ENCODE measurements at regions of chr2 and their contacts with region 1.

Region 1: GRCh38 chr2:104849618-104850141 is 4.2 kb upstream of the POU3F3 start:
- DNase-seq: no peak

Region 2: DNA sequence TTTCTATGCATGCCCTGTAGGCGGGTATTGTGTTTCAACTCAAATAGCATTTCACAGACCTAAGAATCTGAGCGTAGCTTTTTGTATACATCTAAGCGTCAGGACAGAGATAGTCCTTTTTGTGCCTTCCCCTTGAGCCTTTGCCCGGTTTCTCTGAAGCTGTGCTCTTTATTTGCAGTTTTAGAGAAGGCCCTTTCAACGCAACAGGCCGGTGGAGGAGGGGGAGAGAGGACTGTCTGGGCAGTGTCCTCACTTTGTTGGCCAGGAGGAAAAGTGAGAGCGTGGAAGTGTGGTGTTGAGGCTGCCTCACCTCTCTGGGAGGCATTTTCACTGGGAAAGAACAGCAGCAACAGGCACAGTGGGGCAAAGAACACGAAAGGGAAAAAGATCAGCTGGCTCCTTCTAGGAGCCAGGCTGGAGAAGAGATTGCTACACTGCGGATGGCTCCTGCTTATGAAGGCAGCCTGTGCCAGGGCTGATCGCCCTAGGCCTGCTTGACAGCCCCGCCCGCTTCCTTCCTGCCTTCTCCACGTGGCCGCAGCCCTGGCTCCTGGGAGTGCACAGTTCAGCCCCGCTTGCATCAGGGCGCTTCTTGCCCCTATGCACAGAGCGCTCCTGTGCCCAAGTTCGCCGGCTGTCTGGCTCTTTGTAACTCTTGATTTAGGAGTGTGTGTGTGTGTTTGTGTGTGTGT is 191.4 kb before region 1 on chr2:
- intact Hi-C with region 1: loop called (anchors 5 kb)
- DNase-seq: peak; percentile 86

Region 3: DNA sequence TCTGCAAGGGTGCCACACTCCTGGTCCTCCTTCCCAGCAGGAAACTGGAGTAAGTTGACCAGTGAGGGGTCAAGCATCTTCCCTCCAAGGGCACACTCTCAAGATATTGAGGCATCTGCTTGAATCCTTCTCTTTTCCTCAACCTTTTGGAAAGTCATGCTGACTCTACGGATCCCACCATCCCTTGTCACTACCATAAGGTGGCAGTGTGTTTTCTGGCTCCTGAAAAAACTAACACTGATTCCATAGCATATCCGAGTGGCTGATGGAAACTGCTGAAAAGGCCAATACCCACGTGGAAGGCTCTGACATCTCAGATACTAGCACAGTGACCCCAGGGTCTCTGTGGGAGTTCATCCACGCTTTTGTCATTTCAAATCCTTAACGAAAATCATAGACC is 429.0 kb after region 1 on chr2:
- intact Hi-C with region 1: no loop called
- DNase-seq: no peak

Measured in cardiac septum (tissue), 1 donor.